Mammary epithelial cell (primary cell): ENCODE measurements at regions of chr3 and their contacts with region 1.

Region 1: GRCh38 chr3:47961815-47962618 is 54.2 kb downstream of the MAP4 start:
- DNase-seq: peak; percentile 80
- H3K4me3 ChIP-seq: no peak overlapping the region
- H3K27ac ChIP-seq: peak overlapping the region; percentile 66
- H3K4me1 ChIP-seq: peaks cover 22% of the 10 kb centered on the region
- H3K27me3 ChIP-seq: no peaks in the 10 kb centered on the region
- CTCF ChIP-seq: no peak

Region 2: GRCh38 chr3:47022641-47023071 is 939.4 kb before region 1 on chr3:
- CTCF ChIA-PET with region 1: interaction called, 10 read pairs
- dilution Hi-C with region 1: no loop called
- in situ Hi-C with region 1: no loop called
- intact Hi-C with region 1: no loop called
- DNase-seq: no peak
- H3K4me3 ChIP-seq: no peak overlapping the region
- H3K27ac ChIP-seq: no peak overlapping the region
- H3K4me1 ChIP-seq: peaks cover 18% of the 10 kb centered on the region
- H3K27me3 ChIP-seq: no peaks in the 10 kb centered on the region
- CTCF ChIP-seq: no peak